Activated naive CD4-positive, alpha-beta T cell treated with anti-CD3 and anti-CD28 coated beads for 36 hours (primary cell): ENCODE measurements at regions of chr1 and their contacts with region 1.

Region 1: DNA sequence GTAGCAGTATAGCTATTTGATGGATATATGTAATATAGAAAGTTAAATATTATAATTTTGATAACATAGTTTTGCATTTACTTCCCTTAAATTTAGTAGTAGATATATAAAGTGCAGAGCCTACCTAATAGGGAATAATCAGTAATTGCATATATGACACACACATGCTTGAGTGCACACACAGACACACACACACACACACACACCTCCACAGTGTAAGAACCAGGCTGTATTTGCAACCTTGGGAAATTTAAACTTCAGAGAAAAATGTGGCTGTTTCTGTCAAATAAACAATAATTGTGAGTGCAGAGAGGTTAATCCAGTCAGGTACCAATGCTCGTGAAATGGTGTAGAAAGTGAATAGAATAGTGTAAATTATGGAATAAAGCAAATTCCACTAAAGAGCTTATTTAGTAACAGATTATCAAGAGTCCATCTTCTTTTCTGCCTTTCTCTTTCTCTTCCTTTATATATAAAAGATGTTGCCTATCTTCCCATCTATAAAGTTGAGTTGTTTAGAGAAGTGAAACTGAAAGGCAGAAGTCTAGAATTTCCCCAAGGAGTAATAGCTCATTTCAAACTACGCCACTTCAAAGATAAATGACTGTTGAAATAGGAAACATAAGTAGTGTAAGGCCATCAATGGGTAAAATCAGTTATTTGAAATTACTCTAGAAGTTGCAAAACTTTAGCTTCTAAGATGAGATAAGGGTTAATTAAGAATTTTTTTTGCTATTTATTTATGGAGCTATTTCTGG is 273.7 kb downstream of the SRGAP2C start:
- DNase-seq: no peak
- H3K4me3 Mint-ChIP-seq: no peak overlapping the region
- H3K27ac Mint-ChIP-seq: no peak overlapping the region
- H3K4me1 Mint-ChIP-seq: peaks cover 14% of the 10 kb centered on the region
- H3K27me3 Mint-ChIP-seq: peaks cover 2% of the 10 kb centered on the region

Region 2: DNA sequence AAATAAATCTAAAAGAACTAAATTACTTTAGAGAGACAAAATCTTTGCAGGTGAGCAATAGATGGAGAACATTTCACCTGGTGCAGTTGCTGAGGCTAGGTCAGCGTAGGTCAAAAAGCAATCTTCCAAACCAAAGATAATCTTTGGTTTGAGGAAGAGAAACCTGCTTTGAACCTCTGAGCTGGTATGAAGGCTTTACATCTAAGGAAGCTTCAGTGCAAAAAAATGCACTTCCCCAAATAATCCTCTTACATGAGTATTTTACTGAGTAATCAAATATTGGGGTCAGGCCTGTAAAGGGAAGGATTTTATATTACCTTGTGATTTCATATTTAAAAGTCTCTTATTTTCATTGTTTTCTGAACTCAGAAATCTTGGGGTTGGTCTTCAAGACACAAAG is 50.1 kb before region 1 on chr1:
- CTCF ChIA-PET with region 1: no interaction called
- intact Hi-C with region 1: loop called (anchors 10 kb)
- DNase-seq: no peak
- H3K4me3 Mint-ChIP-seq: no peak overlapping the region
- H3K27ac Mint-ChIP-seq: no peak overlapping the region
- H3K4me1 Mint-ChIP-seq: no peaks in the 10 kb centered on the region
- H3K27me3 Mint-ChIP-seq: no peaks in the 10 kb centered on the region

Region 3: DNA sequence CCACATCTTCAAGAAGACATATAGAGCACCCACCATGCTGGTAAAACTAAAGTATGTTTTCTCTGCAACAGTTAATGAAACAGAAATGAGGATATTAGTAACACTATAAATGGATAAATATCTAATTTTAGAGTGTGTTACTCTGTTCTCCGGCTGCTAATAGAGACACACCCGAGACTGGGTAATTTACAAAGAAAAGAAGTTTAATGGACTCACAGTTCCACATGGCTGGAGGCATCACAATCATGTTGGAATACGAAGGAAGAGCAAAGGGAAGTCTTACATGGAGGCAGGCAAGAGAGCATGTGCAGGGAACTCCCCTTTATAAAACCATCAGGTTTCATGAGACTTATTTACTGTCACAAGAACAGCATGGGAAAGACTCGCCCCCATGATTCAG is 13.5 kb after region 1 on chr1:
- CTCF ChIA-PET with region 1: no interaction called
- intact Hi-C with region 1: loop called (anchors 2 kb)
- DNase-seq: no peak
- H3K4me3 Mint-ChIP-seq: no peak overlapping the region
- H3K27ac Mint-ChIP-seq: no peak overlapping the region
- H3K4me1 Mint-ChIP-seq: peaks cover 5% of the 10 kb centered on the region
- H3K27me3 Mint-ChIP-seq: no peaks in the 10 kb centered on the region

Region 4: GRCh38 chr1:121483961-121484424 is 25.5 kb after region 1 on chr1:
- CTCF ChIA-PET with region 1: no interaction called
- intact Hi-C with region 1: no loop called
- DNase-seq: peak; percentile 43
- H3K4me3 Mint-ChIP-seq: no peak overlapping the region
- H3K27ac Mint-ChIP-seq: peak overlapping the region; percentile 77
- H3K4me1 Mint-ChIP-seq: peaks cover 23% of the 10 kb centered on the region
- H3K27me3 Mint-ChIP-seq: no peaks in the 10 kb centered on the region